ENCODE measurements at regions of chr10 and their contacts with region 1.

Region 1: DNA sequence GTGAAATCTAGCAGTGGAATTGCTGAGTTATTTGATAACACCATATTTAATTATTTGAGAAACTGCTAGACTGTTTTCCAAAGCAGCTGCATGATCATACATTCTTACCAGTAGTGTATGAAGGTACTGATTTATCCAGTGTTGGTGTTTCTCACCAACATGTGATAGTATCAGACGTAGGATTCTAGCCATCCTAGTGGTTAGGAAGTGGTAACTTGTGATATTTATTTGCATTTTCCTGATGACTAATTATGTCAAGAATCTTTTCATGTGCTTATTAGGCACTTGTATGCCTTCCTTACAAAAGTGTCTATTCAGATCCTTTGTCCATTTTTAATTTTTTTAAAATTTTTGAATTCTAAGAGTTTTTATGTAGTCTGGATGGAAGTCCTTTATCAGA is 54.2 kb upstream of the PLXDC2 start:
- DNase-seq: no peak
- H3K4me3 ChIP-seq: no peak overlapping the region
- H3K27ac ChIP-seq: no peak overlapping the region
- H3K4me1 ChIP-seq: no peaks in the 10 kb centered on the region
- H3K27me3 ChIP-seq: no peaks in the 10 kb centered on the region
- CTCF ChIP-seq: no peak
- POLR2A ChIP-seq: no peak

Region 2: DNA sequence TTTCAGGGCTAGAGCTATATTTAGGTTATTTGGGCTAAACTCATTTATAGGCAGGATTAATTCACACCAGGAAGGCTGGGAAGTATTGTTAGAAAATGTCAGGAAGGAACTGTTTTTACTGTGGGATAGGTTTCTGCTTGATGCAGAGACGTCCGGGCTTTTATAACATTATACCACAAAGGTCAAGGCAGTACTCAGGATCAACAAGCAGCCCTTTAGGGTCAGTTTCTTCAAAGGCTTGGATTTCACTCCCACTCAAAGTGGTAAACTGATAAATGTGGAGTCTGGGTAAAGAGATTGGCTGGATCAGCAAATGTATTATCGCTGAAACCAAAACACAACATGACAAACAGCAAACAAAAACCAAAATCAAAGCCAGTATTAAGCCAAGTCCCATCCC is 975.5 kb before region 1 on chr10:
- intact Hi-C with region 1: loop called (anchors 5 kb)
- DNase-seq: no peak
- H3K4me3 ChIP-seq: no peak overlapping the region
- H3K27ac ChIP-seq: no peak overlapping the region
- H3K4me1 ChIP-seq: no peaks in the 10 kb centered on the region
- H3K27me3 ChIP-seq: no peaks in the 10 kb centered on the region
- CTCF ChIP-seq: no peak
- POLR2A ChIP-seq: no peak

Region 3: DNA sequence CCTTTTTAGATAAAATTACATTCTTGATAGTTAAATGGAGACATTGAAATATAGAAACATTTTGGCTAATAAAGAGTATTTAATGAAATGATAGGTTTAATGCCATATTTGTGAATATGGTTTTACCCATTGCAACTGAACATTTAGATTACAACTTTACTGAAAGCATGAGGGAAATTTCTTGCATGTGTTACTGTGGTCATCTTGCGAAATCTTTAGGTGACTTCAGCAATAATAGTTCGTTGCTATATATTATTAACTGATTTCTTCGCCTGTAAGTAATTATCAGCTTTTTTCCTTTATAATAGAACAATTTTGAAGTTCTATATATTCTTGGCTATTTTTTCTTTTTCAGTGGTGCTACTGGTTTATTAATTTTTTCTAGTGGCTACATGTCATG is 1855.2 kb after region 1 on chr10:
- intact Hi-C with region 1: no loop called
- DNase-seq: no peak
- H3K4me3 ChIP-seq: no peak overlapping the region
- H3K27ac ChIP-seq: no peak overlapping the region
- H3K4me1 ChIP-seq: no peaks in the 10 kb centered on the region
- H3K27me3 ChIP-seq: no peaks in the 10 kb centered on the region
- CTCF ChIP-seq: no peak
- POLR2A ChIP-seq: no peak

Measured in breast epithelium (tissue), 4 donors.